ENCODE measurements at regions of chr1 and their contacts with region 1.

Region 1: GRCh38 chr1:43558346-43558841 is 27.7 kb downstream of the PTPRF start:
- DNase-seq: peak in 5 of 10 donors; percentile 45 to 78 (median 62)
- H3K4me3 ChIP-seq: peak overlapping the region in 23 of 59 donors; percentile 0 to 41 (median 20)
- H3K27ac ChIP-seq: peak overlapping the region in 57 of 59 donors; percentile 12 to 80 (median 64)
- H3K27me3 ChIP-seq: no peaks in the 10 kb centered on the region
- CTCF ChIP-seq: no peak

Region 2: GRCh38 chr1:43602990-43603389 is 44.6 kb after region 1 on chr1:
- intact Hi-C with region 1: loop called in 1 of 2 experiments (anchors 5 kb)
- DNase-seq: no peak
- H3K4me3 ChIP-seq: no peak overlapping the region
- H3K27ac ChIP-seq: peak overlapping the region in 13 of 59 donors; percentile 14 to 59 (median 37)
- H3K27me3 ChIP-seq: no peaks in the 10 kb centered on the region
- CTCF ChIP-seq: no peak

Measured in dorsolateral prefrontal cortex (tissue), 120 donors.